A673 (cell line): ENCODE measurements at regions of chr10 and their contacts with region 1.

Region 1: DNA sequence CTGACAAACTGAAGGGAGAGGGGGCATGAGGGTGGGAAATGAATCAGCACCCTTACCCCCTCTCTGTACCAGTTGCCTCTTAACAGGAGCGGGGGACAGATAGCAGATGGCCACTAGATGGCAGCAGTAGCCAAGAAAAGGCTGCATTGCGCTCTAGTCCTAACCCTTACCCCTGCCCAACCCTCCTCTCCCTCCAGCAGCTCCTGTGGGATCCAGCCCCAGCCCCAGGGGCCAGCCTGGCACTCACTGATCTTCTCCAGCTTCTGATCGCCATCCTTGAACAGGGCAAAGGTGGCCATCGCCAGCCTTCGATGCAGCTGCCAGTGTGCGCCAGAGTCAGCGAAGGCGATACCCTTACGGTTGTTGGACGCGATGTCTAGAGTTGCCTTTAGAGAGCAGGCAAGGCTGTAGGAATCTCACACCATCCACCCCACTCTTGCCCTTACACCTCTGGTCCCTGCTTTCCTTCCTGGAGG is 2.2 kb downstream of the CYP17A1 start:
- DNase-seq: peak; percentile 86
- H3K4me3 ChIP-seq: no peak overlapping the region
- H3K27ac ChIP-seq: no peak overlapping the region
- H3K4me1 ChIP-seq: no peaks in the 10 kb centered on the region
- H3K27me3 ChIP-seq: no peaks in the 10 kb centered on the region
- CTCF ChIP-seq: peak; percentile 94

Region 2: DNA sequence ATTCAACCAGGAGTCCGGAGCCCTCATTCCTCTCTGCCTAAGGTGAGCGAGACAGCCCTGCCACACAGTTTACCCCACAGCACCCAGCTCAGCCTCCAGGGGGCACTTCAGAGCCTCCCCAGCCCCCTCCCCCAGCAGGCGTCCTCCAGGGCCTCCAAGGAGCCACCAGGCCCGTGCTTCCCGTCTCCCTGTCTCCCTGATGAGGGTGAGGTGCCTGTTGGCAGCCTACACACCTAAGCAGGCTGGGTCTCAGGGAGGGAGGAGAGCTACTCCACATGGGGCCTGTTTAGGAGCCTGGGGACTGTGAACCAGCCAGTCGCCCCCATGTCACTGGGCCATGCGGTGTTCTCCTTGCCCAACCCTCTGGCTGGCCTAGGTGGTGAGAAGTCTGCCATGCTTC is 219.7 kb before region 1 on chr10:
- CTCF ChIA-PET with region 1: no interaction called
- POLR2A ChIA-PET with region 1: no interaction called
- intact Hi-C with region 1: no loop called
- DNase-seq: peak; percentile 37
- H3K4me3 ChIP-seq: no peak overlapping the region
- H3K27ac ChIP-seq: no peak overlapping the region
- H3K4me1 ChIP-seq: no peaks in the 10 kb centered on the region
- H3K27me3 ChIP-seq: no peaks in the 10 kb centered on the region
- CTCF ChIP-seq: peak; percentile 58

Region 3: DNA sequence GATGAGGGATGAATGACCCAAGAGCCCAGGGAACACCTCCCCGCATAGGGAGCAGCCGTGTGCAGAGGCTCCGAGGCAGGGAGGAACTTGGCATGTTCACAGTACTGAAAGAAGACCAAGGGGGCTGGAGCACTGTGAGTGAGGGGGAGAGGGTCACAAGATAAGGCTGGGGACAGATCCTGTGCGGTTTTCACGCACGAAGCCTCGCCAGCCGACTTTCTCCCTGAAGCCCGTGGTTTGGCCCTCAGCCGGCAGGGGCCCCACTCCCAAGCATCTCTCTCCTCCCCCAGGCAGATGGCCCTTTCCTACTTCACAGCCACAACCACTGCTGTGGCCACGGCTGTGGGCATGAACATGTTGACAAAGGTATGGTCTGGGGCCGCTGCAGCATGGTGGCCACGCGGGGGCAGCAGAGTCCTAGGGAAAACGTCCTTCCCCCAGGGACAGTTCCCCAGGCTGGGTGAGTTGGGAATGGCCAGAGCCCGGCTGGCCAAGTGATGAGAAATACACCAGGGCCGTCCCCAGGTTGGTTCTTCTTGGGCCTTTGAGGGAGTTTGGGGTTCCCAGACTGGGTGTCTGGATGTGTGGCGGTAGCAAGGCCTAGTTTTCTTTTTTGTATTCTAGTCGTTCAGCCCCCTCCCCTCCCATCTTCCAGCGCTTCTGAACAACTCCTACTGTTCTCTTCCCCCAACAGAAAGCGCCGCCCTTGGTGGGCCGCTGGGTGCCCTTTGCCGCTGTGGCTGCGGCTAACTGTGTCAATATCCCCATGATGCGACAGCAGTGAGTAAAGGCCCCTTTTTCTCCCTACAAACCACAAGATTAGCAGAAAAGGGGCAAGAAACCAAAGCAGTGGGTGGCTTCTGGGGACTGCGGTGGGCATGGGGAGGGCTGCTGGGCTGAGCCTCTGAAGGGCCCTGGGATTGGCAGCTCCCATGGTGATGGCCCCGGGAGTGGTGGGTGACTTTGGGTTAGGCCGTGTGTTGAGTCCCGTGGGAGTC is 105.7 kb before region 1 on chr10:
- CTCF ChIA-PET with region 1: no interaction called
- POLR2A ChIA-PET with region 1: no interaction called
- intact Hi-C with region 1: loop called (anchors 5 kb)
- DNase-seq: peak; percentile 78
- H3K4me3 ChIP-seq: no peak overlapping the region
- H3K27ac ChIP-seq: no peak overlapping the region
- H3K4me1 ChIP-seq: no peaks in the 10 kb centered on the region
- H3K27me3 ChIP-seq: no peaks in the 10 kb centered on the region
- CTCF ChIP-seq: peak; percentile 94

Region 4: DNA sequence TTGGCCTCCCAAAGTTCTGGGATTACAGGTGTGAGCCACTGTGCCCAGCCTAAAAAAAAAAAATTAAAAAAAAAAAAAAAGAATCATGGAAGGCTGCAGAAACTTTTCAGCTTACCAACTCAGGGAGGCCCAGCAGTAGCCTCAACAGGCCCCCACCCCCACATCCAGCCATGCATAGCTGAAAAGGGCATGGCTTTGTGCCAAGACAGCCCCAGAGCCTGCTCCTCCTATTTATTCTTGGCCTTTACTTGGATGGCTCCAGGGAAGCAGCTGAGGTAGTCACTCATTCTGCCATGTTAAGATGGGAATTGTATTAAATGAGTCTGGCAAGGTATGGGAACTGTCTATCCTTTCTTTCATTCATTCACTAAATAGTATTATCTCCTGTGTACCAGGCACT is 69.3 kb after region 1 on chr10:
- CTCF ChIA-PET with region 1: interaction called, 30 read pairs
- POLR2A ChIA-PET with region 1: no interaction called
- intact Hi-C with region 1: loop called (anchors 1 kb)
- DNase-seq: no peak
- H3K4me3 ChIP-seq: no peak overlapping the region
- H3K27ac ChIP-seq: no peak overlapping the region
- H3K4me1 ChIP-seq: no peaks in the 10 kb centered on the region
- H3K27me3 ChIP-seq: no peaks in the 10 kb centered on the region
- CTCF ChIP-seq: no peak

Region 5: GRCh38 chr10:103069453-103070331 is 234.6 kb after region 1 on chr10:
- CTCF ChIA-PET with region 1: no interaction called
- POLR2A ChIA-PET with region 1: no interaction called
- intact Hi-C with region 1: loop called (anchors 1 kb)
- DNase-seq: peak; percentile 56
- H3K4me3 ChIP-seq: no peak overlapping the region
- H3K27ac ChIP-seq: no peak overlapping the region
- H3K4me1 ChIP-seq: no peaks in the 10 kb centered on the region
- H3K27me3 ChIP-seq: no peaks in the 10 kb centered on the region
- CTCF ChIP-seq: peak; percentile 73

Region 6: GRCh38 chr10:103244663-103245271 is 409.7 kb after region 1 on chr10:
- CTCF ChIA-PET with region 1: interaction called, 4 read pairs
- POLR2A ChIA-PET with region 1: no interaction called
- intact Hi-C with region 1: loop called (anchors 5 kb)
- DNase-seq: peak; percentile 82
- H3K4me3 ChIP-seq: no peak overlapping the region
- H3K27ac ChIP-seq: no peak overlapping the region
- H3K4me1 ChIP-seq: no peaks in the 10 kb centered on the region
- H3K27me3 ChIP-seq: no peaks in the 10 kb centered on the region
- CTCF ChIP-seq: peak; percentile 86

Region 7: GRCh38 chr10:103481974-103482531 is 647.0 kb after region 1 on chr10:
- CTCF ChIA-PET with region 1: no interaction called
- POLR2A ChIA-PET with region 1: no interaction called
- intact Hi-C with region 1: loop called (anchors 5 kb)
- DNase-seq: peak; percentile 70
- H3K4me3 ChIP-seq: no peak overlapping the region
- H3K27ac ChIP-seq: no peak overlapping the region
- H3K4me1 ChIP-seq: no peaks in the 10 kb centered on the region
- H3K27me3 ChIP-seq: no peaks in the 10 kb centered on the region
- CTCF ChIP-seq: peak; percentile 79